Psoas muscle (tissue), 8 donors: ENCODE measurements at regions of chr2 and their contacts with region 1.

Region 1: GRCh38 chr2:129396980-129397599 is 582.4 kb upstream of the RAB6C start:
- DNase-seq: peak in 1 of 2 donors; percentile 64
- ATAC-seq: peak; percentile 61 to 99 (median 92)
- H3K4me3 ChIP-seq: no peak overlapping the region
- H3K27ac ChIP-seq: no peak overlapping the region
- H3K4me1 ChIP-seq: no peaks in the 10 kb centered on the region
- H3K27me3 ChIP-seq: no peaks in the 10 kb centered on the region
- CTCF ChIP-seq: peak; percentile 72

Region 2: DNA sequence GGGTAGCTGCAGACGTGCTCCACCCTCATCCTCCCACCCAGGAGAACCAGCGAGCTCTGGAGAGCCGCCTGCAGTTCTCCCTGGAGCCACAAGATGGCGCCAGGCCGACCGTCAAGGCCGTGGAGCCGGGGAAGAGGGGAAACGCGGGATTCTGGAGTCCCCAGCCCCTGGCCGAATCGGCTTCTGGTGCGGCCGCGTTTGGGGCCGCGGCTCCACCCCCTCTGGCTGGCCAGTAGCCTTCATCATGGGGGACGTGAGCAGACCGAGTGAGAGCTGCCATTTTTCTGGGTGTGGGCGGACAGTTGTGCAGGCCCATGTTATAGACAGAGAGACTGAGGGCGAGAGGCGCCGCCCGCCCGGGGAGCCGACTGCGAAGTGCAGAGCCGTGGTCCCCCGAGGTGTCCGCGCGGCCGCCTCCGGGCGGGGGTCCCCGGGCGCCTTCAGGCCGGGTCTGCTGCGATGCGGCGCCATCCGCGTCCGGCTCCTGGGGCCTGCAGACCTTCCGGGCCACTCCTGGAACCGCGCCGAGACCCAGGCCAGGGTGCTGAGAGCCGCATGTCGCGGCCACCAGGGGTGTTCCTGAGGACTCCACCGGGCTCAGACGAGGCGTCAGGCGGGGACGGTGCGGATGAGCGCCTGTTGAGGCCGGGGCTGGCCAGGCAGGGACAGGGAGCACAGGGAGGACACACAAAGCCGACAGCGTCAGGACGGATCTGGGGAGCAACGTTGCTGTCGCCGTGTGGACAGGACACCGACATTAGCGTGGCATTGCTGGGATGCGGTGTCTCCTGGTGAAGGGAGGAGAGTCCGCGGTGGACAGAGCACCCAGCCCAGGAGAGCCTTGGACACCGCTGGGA is 660.2 kb before region 1 on chr2:
- intact Hi-C with region 1: loop called (anchors 5 kb)
- DNase-seq: peak; percentile 80 to 90
- ATAC-seq: peak; percentile 80 to 91 (median 84)
- H3K4me3 ChIP-seq: peak overlapping the region; percentile 62
- H3K27ac ChIP-seq: no peak overlapping the region
- H3K4me1 ChIP-seq: peaks cover 7% of the 10 kb centered on the region
- H3K27me3 ChIP-seq: no peaks in the 10 kb centered on the region
- CTCF ChIP-seq: peak; percentile 99

Region 3: GRCh38 chr2:129191235-129191929 is 205.7 kb before region 1 on chr2:
- intact Hi-C with region 1: loop called in 1 of 2 experiments (anchors 5 kb)
- DNase-seq: no peak
- ATAC-seq: no peak
- H3K4me3 ChIP-seq: no peak overlapping the region
- H3K27ac ChIP-seq: no peak overlapping the region
- H3K4me1 ChIP-seq: no peaks in the 10 kb centered on the region
- H3K27me3 ChIP-seq: no peaks in the 10 kb centered on the region
- CTCF ChIP-seq: no peak

Region 4: DNA sequence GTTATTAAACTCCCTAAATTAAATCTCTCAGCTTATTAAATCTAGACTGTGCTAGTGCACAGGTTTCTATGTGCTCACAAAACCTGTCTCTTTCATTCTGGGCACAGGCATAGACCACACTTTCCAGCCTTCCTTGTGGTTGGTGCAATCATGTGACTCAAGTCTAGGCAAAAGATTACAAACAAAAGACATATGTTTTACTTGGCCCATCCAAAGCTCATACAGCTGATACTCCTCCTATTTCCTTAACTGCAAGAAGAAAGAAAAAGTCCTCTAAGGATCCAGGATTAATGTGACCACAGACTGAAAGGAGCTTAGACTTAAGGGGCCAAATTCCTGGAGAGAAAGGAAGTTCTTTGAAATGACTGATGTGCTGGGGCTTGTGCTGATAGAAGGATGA is 148.9 kb before region 1 on chr2:
- intact Hi-C with region 1: loop called in 1 of 2 experiments (anchors 10 kb)
- DNase-seq: no peak
- ATAC-seq: no peak
- H3K4me3 ChIP-seq: no peak overlapping the region
- H3K27ac ChIP-seq: no peak overlapping the region
- H3K4me1 ChIP-seq: no peaks in the 10 kb centered on the region
- H3K27me3 ChIP-seq: no peaks in the 10 kb centered on the region
- CTCF ChIP-seq: no peak

Region 5: GRCh38 chr2:129331642-129332041 is 65.4 kb before region 1 on chr2:
- intact Hi-C with region 1: loop called in 1 of 2 experiments (anchors 10 kb)
- DNase-seq: no peak
- ATAC-seq: no peak
- H3K4me3 ChIP-seq: no peak overlapping the region
- H3K27ac ChIP-seq: no peak overlapping the region
- H3K4me1 ChIP-seq: peaks cover 14% of the 10 kb centered on the region
- H3K27me3 ChIP-seq: no peaks in the 10 kb centered on the region
- CTCF ChIP-seq: no peak